Dendritic cell treated with granulocyte-macrophage colony-stimulating factor and Interleukin-4, amounts not matched to agents 40 ng/mL and 50 ng/mL, for 4 days (primary cell): ENCODE measurements at regions of chr1 and their contacts with region 1.

Region 1: DNA sequence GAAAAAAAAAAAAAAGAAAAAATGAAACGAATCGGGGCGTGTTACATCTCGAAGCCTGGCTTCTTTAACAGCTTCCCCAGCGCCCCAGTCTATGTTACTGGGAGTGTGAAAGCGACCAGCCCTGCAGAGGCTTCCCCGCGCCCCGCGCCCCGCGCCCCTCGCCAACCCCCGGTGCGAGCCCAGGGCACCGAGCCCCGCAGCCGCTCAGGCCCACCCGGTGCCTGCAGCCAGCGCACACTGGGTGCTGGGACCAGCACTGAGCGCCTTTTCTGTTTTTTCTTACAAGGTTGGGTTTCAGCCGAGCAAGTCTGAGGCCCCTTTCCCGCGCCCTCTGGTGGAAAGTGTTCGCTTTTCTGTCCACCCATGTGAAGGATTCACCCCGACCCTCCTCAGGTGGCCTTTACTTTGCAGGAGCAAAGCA is 42.1 kb upstream of the ZNF496 start:
- H3K4me3 Mint-ChIP-seq: peak overlapping the region; percentile 45
- H3K27ac Mint-ChIP-seq: peak overlapping the region; percentile 52
- H3K4me1 Mint-ChIP-seq: peaks cover 21% of the 10 kb centered on the region
- H3K27me3 Mint-ChIP-seq: no peaks in the 10 kb centered on the region

Region 2: DNA sequence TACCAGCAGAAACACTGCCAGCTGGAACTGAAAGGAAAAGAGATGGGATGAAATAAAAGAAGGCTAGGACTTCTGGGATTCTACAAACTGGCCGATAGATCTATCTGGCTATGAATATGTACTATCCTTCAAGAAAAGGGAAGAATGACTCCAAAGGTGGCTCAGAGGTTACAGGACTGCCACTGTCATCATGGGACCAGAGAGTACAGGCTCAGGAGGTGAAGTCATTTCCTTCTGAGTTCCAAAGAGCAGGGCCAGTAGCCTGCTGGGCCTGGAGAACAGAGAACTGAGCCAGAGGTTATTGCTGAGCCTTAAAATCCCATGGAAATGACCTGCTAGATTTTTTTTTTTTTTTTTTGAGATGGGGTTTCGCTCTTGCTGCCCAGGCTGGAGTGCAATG is 69.7 kb before region 1 on chr1:
- intact Hi-C with region 1: no loop called
- H3K4me3 Mint-ChIP-seq: no peak overlapping the region
- H3K27ac Mint-ChIP-seq: no peak overlapping the region
- H3K4me1 Mint-ChIP-seq: peaks cover 14% of the 10 kb centered on the region
- H3K27me3 Mint-ChIP-seq: no peaks in the 10 kb centered on the region

Region 3: DNA sequence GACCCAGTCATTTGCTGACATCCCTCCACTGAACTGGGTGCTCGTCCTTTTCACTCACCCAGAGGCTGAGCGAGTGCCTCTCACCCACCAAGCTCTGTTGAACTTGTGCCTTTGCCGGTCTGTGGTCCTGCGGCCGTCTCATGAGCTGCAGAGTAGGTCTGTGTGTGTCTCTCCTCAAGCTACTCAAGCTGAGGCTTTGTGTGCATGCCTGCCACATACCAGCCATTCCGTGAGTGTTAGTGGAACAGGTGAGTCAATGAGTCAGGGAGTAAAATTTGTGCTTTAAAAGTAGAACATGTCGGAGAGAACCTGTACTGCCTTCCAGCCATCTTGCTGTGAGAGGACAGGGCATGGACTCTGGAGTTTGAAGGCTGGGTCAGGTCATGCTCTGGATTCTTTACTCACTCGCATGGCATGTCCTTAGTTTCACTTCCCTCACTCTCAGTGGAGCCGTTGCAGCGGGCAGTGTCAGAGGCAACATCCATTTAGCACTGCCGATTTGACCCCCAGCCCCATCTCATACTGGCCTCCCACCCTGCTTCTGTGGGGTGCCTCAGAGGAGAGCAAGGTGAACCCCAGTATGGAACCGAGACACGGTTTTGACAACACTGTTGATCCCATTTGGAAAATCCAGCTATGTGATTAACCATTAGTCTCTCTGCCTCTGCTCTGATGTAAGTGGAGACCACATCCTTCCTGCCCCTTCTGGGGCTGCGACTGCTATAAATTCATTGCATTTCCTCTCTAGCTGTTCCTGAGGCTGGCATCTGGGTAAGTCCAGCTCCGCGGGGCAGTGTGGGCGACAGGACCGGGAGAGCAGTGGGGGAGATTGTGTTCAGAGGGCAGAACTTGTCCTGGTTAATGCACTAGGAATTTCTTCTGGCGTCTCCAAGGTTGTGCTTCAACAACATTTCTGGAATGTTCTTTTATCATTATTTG is 42.0 kb after region 1 on chr1 and contains the start of gene NLRP3:
- intact Hi-C with region 1: loop called (anchors 5 kb)
- H3K4me3 Mint-ChIP-seq: peak within 1 kb of the TSS; percentile 87
- H3K27ac Mint-ChIP-seq: peak within 1 kb of the TSS; percentile 87
- H3K4me1 Mint-ChIP-seq: peaks cover 70% of the 10 kb centered on the region
- H3K27me3 Mint-ChIP-seq: no peaks in the 10 kb centered on the region

Region 4: GRCh38 chr1:247574664-247575063 is 200.9 kb after region 1 on chr1:
- intact Hi-C with region 1: loop called (anchors 5 kb)
- H3K4me3 Mint-ChIP-seq: no peak overlapping the region
- H3K27ac Mint-ChIP-seq: no peak overlapping the region
- H3K4me1 Mint-ChIP-seq: no peaks in the 10 kb centered on the region
- H3K27me3 Mint-ChIP-seq: no peaks in the 10 kb centered on the region